Adrenal gland (tissue), 19 donors: ENCODE measurements at regions of chr3 and their contacts with region 1.

Region 1: DNA sequence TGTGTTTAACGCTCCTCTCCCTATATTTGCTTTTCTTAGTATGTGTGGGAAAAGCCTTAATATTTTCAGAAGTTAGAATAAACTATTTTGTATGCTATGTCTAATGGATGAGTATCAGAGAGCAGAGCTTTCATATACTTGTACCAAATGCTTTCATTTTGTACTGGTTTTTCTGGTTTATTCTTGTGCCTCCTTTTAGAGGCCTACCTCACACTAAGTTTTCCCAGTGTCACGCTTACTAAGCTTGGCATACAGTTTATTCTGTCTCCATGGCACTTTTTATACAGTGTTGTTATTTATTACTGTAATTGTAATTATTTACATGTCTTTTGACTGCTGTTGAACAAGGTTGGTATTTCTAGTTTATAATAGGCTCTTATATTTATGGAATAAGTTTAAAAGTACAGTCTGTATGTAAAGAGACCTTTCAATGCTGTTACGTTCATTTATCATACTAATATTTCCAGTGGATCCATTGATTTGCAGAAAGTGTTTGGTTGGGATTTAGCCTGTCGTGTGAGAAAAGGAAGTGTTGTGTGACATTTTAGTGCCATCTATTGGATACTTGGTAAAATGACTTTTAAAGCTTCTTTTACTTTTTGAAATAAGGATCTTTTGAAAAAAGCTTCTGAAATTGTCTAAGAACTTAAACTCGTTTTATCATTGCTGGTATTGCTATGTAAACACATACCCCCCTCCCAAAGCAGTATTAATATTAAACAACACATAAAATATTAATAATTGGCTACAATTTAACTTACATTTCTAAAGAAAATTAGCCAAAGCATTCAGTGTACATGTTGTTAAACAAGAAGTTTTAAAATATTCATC is 5.2 kb upstream of the EBLN2 start:
- DNase-seq: no peak
- H3K4me3 ChIP-seq: no peak overlapping the region
- H3K27ac ChIP-seq: no peak overlapping the region
- H3K4me1 ChIP-seq: peaks cover 5 to 34% of the 10 kb centered on the region in 2 donors
- H3K27me3 ChIP-seq: no peaks in the 10 kb centered on the region
- CTCF ChIP-seq: peak; percentile 35 to 77 (median 60)
- POLR2A ChIP-seq: no peak

Region 2: DNA sequence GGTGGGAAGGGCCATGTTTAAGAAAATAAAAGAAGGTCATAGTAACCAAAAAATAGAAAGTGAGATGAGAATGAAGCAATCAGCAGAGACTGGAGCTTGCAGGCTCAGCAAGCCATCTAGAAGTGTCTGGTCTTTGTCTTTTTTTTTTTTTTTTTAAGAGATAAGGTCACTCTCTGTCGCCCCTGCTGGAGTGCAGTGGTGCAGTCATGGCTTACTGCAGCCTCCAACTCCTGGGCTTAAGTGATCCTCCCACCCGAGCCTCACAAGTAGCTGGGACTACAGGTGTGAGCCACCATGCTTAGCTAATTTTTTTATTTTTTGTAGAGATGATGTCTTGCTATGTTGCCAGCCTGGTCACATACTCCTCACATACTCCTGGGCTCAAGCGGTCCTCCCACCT is 132.2 kb before region 1 on chr3:
- intact Hi-C with region 1: no loop called
- DNase-seq: no peak
- H3K4me3 ChIP-seq: no peak overlapping the region
- H3K27ac ChIP-seq: no peak overlapping the region
- H3K4me1 ChIP-seq: no peaks in the 10 kb centered on the region
- H3K27me3 ChIP-seq: no peaks in the 10 kb centered on the region
- CTCF ChIP-seq: no peak
- POLR2A ChIP-seq: no peak

Region 3: DNA sequence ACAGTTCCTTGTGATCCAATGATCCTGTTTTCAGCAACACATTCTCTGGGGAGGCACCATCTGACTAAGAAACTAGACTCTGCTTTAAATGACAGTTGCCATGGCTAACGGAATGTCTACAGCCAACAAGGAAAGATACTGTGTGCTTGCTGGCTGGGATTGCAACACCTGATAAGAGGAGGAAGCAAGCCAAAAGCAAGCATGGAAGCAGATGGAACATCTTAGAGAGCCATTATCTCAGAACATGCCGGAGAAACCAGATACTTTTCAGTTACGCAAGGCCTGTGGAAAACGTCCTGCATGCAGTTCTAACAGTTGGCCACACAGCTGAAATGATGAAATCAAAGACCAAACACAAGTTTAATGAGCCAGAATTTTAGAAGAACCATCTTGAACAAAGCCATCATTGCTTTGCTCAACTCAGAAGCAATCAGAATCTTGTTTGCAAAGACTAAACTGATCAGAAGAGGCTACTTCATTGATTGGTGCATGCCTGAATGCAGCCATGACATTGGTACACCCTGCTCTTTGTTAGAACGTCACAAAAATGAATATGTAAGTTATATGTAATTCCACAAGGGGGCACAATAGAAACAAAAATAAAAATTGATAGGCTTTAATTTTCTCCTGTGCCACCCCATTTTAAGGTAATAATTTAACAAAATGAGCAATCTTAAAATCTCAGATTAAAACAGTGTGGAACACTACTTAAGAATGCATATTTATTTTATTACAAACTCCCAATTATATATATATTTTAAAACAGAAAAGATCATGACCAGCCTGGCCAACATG is 117.6 kb before region 1 on chr3:
- intact Hi-C with region 1: loop called in 1 of 2 experiments (anchors 5 kb)
- DNase-seq: peak; percentile 51 to 91 (median 85)
- H3K4me3 ChIP-seq: no peak overlapping the region
- H3K27ac ChIP-seq: peak overlapping the region; percentile 29 to 76 (median 43)
- H3K4me1 ChIP-seq: peaks cover 0 to 10% of the 10 kb centered on the region in 2 donors
- H3K27me3 ChIP-seq: no peaks in the 10 kb centered on the region
- CTCF ChIP-seq: peak; percentile 50 to 100 (median 88)
- POLR2A ChIP-seq: no peak